Right ventricle myocardium inferior (tissue), 1 donor: ENCODE measurements at regions of chr16 and their contacts with region 1.

Region 1: GRCh38 chr16:16021988-16022682 is 72.7 kb downstream of the ABCC1 start:
- DNase-seq: peak; percentile 95
- ATAC-seq: peak; percentile 98

Region 2: GRCh38 chr16:15888072-15888976 is 133.8 kb before region 1 on chr16 and contains the start of gene CEP20:
- intact Hi-C with region 1: loop called (anchors 5 kb)
- DNase-seq: peak; percentile 100
- ATAC-seq: peak; percentile 100
- total RNA-seq, gene CEP20: 32.0 TPM

Region 3: DNA sequence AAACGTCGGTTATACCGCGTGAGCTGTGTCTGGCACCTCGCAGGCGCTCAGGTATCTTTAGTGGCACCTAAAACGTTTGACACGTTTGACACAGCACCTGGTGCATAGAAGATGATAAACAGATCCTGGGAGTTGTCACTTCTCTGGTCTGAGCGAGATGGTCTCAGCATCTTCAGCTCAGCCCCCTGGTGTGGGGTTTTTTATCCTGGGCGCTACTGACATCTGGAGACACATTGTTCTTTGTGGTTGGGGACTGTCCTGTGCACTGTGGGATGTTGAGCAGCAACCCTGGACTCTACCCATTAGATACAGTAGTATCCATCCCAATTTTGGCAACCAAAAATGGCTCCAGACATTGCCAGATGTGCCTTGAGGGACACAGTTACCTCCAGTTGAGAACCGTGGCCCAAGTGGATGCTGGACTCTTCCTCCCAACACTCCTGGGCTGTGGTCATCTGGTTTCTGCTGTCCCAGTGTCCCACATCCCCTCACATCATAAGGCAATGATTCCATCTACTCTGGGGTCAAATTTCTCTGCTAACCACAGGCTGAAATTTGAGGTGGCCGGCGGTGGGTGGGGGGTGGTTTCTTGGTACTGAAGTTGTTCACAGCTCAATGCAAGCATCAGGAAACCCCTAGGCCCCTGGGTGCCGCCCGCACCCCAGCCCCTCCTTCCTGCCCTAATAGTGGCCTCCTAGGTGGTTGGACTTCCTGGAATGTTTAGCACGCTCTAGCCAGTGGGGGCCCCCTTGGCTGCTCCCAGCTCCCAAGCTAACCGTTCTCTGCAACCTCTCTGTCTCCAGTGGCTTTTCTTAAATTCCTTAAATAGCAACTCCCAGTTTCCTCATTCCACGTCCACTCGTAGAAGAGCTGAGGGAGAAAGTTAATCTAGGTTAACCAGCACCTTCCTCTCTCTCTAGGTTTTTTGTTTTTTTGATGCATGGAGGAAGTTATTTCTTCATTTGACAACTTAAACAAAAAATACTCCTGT is 52.1 kb after region 1 on chr16:
- intact Hi-C with region 1: loop called (anchors 5 kb)
- DNase-seq: no peak
- ATAC-seq: peak; percentile 42